ENCODE measurements at regions of chr15 and their contacts with region 1.

Region 1: GRCh38 chr15:34439878-34440277 is 2.3 kb upstream of the GOLGA8A start:
- DNase-seq: no peak
- H3K4me3 Mint-ChIP-seq: no peak overlapping the region
- H3K27ac Mint-ChIP-seq: no peak overlapping the region
- H3K4me1 Mint-ChIP-seq: peaks cover 2% of the 10 kb centered on the region
- H3K27me3 Mint-ChIP-seq: peaks cover 6% of the 10 kb centered on the region

Region 2: DNA sequence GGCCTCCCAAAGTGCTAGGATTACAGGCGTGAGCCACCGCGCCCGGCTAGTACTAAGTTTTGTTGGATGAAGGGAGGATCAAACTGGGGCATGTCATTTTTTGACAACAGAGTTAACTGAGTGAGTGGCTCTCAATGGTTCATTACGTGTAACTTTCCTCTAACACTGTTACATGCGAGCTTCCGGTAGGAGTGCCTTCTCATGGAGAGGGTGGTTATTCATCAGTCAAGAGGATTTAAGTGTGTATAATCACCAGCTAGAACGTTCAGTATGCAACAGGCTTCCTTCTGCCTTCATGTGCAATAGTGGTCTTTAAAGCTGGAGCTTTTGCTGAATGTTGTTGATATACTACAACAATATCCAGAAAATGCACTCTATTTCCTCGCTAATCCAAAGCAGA is 16.8 kb after region 1 on chr15:
- CTCF ChIA-PET with region 1: no interaction called
- intact Hi-C with region 1: loop called (anchors 1 kb)
- DNase-seq: no peak
- H3K4me3 Mint-ChIP-seq: no peak overlapping the region
- H3K27ac Mint-ChIP-seq: no peak overlapping the region
- H3K4me1 Mint-ChIP-seq: no peaks in the 10 kb centered on the region
- H3K27me3 Mint-ChIP-seq: peaks cover 7% of the 10 kb centered on the region

Region 3: DNA sequence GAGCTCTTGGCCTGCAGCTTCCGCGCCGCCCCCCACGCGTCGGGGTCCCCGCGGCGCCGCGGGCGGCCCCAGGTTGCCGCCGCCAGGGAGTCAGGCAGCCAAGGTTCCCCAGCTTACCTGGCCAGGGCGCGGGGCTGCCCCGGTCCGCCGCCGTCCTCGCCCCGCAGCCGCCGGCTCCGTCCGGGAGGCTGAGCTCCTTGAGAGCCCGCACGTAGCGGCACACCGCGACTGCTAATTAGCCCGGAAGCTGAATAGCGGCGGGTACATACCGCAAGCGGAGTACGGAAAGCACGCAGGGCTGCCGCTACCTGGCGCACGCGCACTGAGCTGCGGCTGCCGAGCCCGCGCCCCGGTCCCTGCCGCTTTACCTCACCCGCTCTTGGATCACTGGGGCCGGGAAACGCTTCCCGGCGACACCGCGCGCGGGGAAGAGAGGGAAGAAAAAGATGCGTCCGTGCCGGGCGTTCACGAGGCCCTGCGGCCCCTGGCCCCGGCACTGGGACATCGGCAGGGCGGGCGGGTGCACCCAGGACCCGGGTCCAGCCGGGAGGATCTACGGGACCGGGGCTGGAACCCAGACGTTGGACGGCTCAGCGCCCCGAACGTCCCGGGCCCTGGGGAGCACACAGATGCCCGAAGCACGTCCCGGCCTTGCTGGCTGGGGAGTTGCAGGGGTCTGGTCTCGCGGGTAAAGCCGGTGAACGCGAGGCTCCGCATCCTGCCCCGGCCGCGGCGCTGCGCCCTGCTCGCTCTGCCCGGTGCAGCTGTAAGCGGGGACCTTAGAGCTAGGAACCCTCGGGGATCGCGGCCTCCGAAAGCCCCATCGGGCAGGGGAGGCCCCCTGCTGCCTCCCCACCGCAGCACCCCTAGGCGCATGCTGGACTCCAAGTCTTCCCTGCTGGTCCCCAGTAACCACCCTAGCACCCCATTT is 143.8 kb after region 1 on chr15 and contains the start of gene GOLGA8B:
- CTCF ChIA-PET with region 1: no interaction called
- intact Hi-C with region 1: no loop called
- DNase-seq: peak; percentile 87
- H3K4me3 Mint-ChIP-seq: peak within 1 kb of the TSS; percentile 90
- H3K27ac Mint-ChIP-seq: peak within 1 kb of the TSS; percentile 75
- H3K4me1 Mint-ChIP-seq: peaks cover 44% of the 10 kb centered on the region
- H3K27me3 Mint-ChIP-seq: no peaks in the 10 kb centered on the region
- total RNA-seq, gene GOLGA8B: 66.5 to 67.2 TPM

Region 4: DNA sequence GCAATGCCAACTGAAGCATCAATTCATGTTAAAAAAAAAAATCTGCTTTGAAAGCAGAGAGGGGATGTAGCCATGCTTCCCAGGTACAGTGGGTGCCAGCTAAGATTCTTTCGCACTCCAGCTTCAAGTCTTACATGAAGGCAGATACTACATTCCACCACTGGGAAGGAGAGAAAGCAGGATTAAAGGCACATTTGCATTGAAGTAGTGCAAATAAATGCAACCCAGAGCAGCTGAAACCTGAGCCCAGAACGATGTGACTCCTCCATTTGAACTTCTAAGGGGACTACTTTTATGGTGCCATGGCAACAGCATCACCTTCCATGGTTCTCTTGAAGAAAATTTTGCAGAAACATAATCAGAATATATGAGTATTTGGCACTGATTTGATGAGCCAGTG is 334.0 kb after region 1 on chr15:
- CTCF ChIA-PET with region 1: no interaction called
- intact Hi-C with region 1: no loop called
- DNase-seq: no peak
- H3K4me3 Mint-ChIP-seq: no peak overlapping the region
- H3K27ac Mint-ChIP-seq: no peak overlapping the region
- H3K4me1 Mint-ChIP-seq: no peaks in the 10 kb centered on the region
- H3K27me3 Mint-ChIP-seq: peaks cover 4% of the 10 kb centered on the region